Naive thymus-derived CD8-positive, alpha-beta T cell (primary cell): ENCODE measurements at regions of chr10 and their contacts with region 1.

Region 1: GRCh38 chr10:119502209-119502608 is 40.3 kb downstream of the RGS10 start:
- DNase-seq: peak; percentile 66 to 96 (median 90)
- ATAC-seq: peak; percentile 78 to 88
- H3K4me3 Mint-ChIP-seq: peak overlapping the region; percentile 68 to 87 (median 82)
- H3K27ac Mint-ChIP-seq: peak overlapping the region; percentile 94 to 100 (median 99)
- H3K4me1 Mint-ChIP-seq: peaks cover 58 to 99% (median 97%) of the 10 kb centered on the region in 4 donors
- H3K27me3 Mint-ChIP-seq: no peaks in the 10 kb centered on the region

Region 2: DNA sequence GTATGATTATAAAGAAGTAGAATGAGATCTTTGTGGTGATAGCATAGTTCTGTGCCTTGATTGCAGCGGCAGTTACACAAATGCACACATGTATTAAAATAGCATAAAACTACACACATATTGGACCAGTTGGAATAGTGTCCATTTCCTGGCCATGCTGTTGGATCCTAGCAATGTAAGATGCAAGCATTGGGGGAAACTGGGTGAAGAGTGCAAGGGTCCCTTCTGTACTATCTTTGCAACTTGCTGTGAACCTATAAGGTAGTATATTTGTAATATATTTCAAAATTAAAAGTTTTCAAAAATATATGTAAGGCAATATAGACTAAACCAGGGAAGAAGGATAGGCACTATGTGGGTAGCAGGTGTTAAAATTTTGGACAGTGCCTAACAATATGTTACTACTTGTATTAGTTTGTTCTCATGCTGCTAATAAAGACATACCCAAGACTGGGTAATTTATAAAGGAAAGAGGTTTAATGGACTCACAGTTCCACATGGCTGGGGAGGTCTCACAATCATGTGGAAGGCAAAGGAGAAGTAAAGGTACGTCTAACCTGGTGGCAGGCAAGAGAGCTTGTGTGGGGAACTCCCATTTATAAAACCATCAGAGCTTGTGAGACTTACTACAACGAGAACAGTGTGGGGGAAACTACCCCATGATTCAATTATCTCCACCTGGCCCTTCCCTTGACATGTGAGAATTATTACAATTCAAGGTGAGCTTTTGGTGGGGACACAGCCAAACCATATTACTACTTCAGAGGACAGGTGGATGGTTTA is 31.1 kb before region 1 on chr10:
- POLR2A ChIA-PET with region 1: no interaction called
- DNase-seq: no peak
- ATAC-seq: no peak
- H3K4me3 Mint-ChIP-seq: no peak overlapping the region
- H3K27ac Mint-ChIP-seq: no peak overlapping the region
- H3K4me1 Mint-ChIP-seq: peaks cover 0 to 12% (median 10%) of the 10 kb centered on the region in 4 donors
- H3K27me3 Mint-ChIP-seq: no peaks in the 10 kb centered on the region

Region 3: DNA sequence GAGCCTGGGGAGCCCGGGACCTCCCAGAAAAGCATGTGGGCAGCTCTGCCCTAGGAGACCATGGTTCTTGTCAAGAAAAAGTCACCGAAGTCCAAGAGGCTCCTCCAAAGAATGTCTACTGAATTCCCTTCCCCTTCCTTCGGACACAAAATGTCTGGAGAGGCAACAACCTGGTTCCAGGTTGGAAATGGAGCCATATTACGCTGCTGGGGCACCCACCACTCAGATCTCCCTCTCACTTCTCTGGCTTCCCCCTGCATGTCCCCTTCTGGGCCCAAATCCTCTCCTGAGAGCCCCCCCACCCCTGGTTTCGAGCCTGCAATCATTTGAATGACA is 12.2 kb before region 1 on chr10:
- POLR2A ChIA-PET with region 1: interaction called, 54 read pairs
- DNase-seq: no peak
- ATAC-seq: no peak
- H3K4me3 Mint-ChIP-seq: peak overlapping the region; percentile 75 to 94 (median 88)
- H3K27ac Mint-ChIP-seq: peak overlapping the region; percentile 75 to 99 (median 96)
- H3K4me1 Mint-ChIP-seq: peaks cover 21 to 61% (median 55%) of the 10 kb centered on the region in 4 donors
- H3K27me3 Mint-ChIP-seq: no peaks in the 10 kb centered on the region